Caco-2 (cell line): ENCODE measurements at regions of chr10 and their contacts with region 1.

Region 1: DNA sequence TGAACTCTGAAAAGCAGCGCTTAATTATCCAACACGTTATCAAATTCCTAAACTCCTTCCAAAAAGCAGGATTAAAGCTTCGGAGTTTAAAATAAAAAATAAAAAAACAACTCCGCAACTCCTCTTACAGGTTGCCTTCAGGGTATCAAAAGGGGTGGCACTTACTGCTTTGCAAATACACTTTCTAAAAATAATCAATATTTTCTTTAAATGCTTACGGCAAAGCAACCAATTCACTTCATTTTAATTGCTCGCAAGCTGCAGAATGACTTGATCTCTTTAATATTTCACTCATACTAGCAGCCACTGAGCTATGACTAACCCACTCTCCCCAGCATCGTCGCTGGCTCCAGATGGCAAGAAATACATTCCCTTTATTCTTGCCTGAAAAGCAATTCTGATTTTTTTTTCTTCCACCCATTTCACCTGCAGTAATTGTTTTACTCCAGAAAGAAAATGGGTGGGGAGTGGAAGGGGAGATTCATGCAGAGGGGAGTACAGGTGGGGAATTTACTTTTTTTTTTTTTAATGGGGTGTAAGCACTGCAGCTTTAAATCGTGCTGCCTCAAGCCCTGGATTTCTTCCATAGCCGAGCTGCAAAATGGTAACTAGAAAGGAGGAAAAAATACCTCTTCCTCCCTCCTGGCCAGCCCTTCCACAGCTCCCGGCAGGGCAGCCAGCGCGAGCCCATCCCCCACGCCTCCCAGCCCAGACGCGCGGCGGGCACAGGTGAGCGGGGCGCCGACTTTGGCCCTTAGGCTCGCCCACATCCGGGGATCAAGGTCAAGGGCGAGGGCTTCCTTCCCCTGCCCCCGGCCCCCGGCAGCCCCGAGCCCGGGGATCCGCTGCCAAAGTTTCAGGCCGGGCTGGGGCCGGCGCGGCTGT is 54.2 kb upstream of the FHIP2A start:
- DNase-seq: peak in 1 of 2 experiments; percentile 43
- H3K4me3 ChIP-seq: peak overlapping the region; percentile 57
- H3K4me3 Mint-ChIP-seq: peak overlapping the region; percentile 55
- H3K27ac Mint-ChIP-seq: no peak overlapping the region
- H3K4me1 ChIP-seq: peaks cover 15% of the 10 kb centered on the region; the same call in 1 of the 2 replicates
- H3K4me1 Mint-ChIP-seq: peaks cover 7% of the 10 kb centered on the region
- H3K27me3 ChIP-seq: no peaks in the 10 kb centered on the region
- H3K27me3 Mint-ChIP-seq: peaks cover 15% of the 10 kb centered on the region
- CTCF ChIP-seq: no peak

Region 2: GRCh38 chr10:114477285-114477684 is 290.1 kb before region 1 on chr10:
- CTCF ChIA-PET with region 1: no interaction called
- POLR2A ChIA-PET with region 1: no interaction called
- intact Hi-C with region 1: no loop called
- DNase-seq: no peak
- H3K4me3 ChIP-seq: no peak overlapping the region
- H3K4me3 Mint-ChIP-seq: no peak overlapping the region
- H3K27ac Mint-ChIP-seq: no peak overlapping the region
- H3K4me1 ChIP-seq: peaks cover 3% of the 10 kb centered on the region; the same call in 1 of the 2 replicates
- H3K4me1 Mint-ChIP-seq: peaks cover 7% of the 10 kb centered on the region
- H3K27me3 ChIP-seq: no peaks in the 10 kb centered on the region
- H3K27me3 Mint-ChIP-seq: no peaks in the 10 kb centered on the region
- CTCF ChIP-seq: no peak

Region 3: DNA sequence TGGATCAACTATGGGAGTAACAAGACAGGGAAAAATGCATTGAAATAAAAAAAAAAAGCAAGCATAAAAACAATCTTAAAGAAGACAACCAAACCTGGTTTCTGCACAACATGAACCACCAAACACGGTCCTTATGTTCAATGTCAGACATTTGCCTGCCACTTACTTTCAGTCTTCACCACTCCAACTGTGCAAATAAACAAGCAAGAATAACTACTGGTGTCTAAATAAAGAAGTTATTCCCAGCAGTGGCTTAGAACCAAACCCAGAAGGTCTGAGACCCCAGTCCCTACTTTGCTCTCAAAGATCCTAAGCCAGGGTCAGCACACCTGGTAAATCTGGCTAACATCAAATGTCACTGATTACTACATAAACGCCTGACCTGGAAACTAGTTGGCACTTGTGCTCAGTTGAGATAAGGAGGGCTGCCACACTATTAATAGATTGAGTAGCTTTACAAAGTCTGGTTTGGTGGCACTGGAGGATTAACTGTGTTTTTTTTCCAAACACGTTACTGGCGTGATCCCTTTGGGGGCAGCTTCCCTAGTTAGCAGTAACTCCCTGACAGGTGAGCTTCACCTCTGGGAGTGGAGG is 46.6 kb before region 1 on chr10:
- CTCF ChIA-PET with region 1: no interaction called
- POLR2A ChIA-PET with region 1: no interaction called
- intact Hi-C with region 1: loop called (anchors 5 kb)
- DNase-seq: no peak
- H3K4me3 ChIP-seq: no peak overlapping the region
- H3K4me3 Mint-ChIP-seq: no peak overlapping the region
- H3K27ac Mint-ChIP-seq: no peak overlapping the region
- H3K4me1 ChIP-seq: no peaks in the 10 kb centered on the region
- H3K4me1 Mint-ChIP-seq: no peaks in the 10 kb centered on the region
- H3K27me3 ChIP-seq: no peaks in the 10 kb centered on the region
- H3K27me3 Mint-ChIP-seq: no peaks in the 10 kb centered on the region
- CTCF ChIP-seq: no peak

Region 4: DNA sequence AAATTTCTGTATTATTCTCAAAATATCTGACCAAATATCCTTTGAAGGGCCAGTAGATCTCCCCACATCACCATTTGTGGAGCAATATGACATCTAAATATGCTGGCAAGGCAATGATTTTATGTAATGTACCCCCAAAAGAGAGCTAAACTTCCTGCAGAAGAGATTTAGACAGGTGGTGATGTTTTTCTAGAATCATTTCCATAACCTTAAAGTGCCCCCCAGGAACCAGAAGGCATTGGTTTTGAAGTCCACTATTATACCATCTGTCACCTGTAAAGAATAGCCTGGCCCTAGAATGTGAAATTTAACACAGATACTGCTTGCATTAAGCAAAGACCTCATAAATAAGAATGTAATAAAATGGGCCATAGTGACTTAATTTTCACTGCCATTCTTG is 31.4 kb before region 1 on chr10:
- CTCF ChIA-PET with region 1: no interaction called
- POLR2A ChIA-PET with region 1: no interaction called
- intact Hi-C with region 1: no loop called
- DNase-seq: no peak
- H3K4me3 ChIP-seq: no peak overlapping the region
- H3K4me3 Mint-ChIP-seq: no peak overlapping the region
- H3K27ac Mint-ChIP-seq: no peak overlapping the region
- H3K4me1 ChIP-seq: no peaks in the 10 kb centered on the region
- H3K4me1 Mint-ChIP-seq: no peaks in the 10 kb centered on the region
- H3K27me3 ChIP-seq: no peaks in the 10 kb centered on the region
- H3K27me3 Mint-ChIP-seq: peaks cover 9% of the 10 kb centered on the region
- CTCF ChIP-seq: no peak

Region 5: GRCh38 chr10:114821293-114821914 is 54.1 kb after region 1 on chr10 and contains the start of gene FHIP2A:
- CTCF ChIA-PET with region 1: interaction called, 3 read pairs
- POLR2A ChIA-PET with region 1: no interaction called
- intact Hi-C with region 1: loop called (anchors 5 kb)
- DNase-seq: peak; percentile 69 to 93
- H3K4me3 ChIP-seq: peak within 1 kb of the TSS; percentile 90
- H3K4me3 Mint-ChIP-seq: peak within 1 kb of the TSS; percentile 92
- H3K27ac Mint-ChIP-seq: peak within 1 kb of the TSS; percentile 73
- H3K4me1 ChIP-seq: no peaks in the 10 kb centered on the region
- H3K4me1 Mint-ChIP-seq: peaks cover 10% of the 10 kb centered on the region
- H3K27me3 ChIP-seq: no peaks in the 10 kb centered on the region
- H3K27me3 Mint-ChIP-seq: peaks cover 4% of the 10 kb centered on the region
- CTCF ChIP-seq: peak; percentile 41 to 58
- total RNA-seq, gene FHIP2A: 15.2 and 15.3 TPM in 2 replicates

Region 6: GRCh38 chr10:114829160-114829909 is 62.0 kb after region 1 on chr10:
- CTCF ChIA-PET with region 1: interaction called, 10 read pairs
- POLR2A ChIA-PET with region 1: no interaction called
- intact Hi-C with region 1: loop called (anchors 5 kb)
- DNase-seq: peak in 1 of 2 experiments; percentile 5
- H3K4me3 ChIP-seq: no peak overlapping the region
- H3K4me3 Mint-ChIP-seq: no peak overlapping the region
- H3K27ac Mint-ChIP-seq: no peak overlapping the region
- H3K4me1 ChIP-seq: peaks cover 13% of the 10 kb centered on the region
- H3K4me1 Mint-ChIP-seq: peaks cover 26% of the 10 kb centered on the region
- H3K27me3 ChIP-seq: no peaks in the 10 kb centered on the region
- H3K27me3 Mint-ChIP-seq: no peaks in the 10 kb centered on the region
- CTCF ChIP-seq: no peak